PC-9 (cell line): ENCODE measurements at regions of chr15 and their contacts with region 1.

Region 1: DNA sequence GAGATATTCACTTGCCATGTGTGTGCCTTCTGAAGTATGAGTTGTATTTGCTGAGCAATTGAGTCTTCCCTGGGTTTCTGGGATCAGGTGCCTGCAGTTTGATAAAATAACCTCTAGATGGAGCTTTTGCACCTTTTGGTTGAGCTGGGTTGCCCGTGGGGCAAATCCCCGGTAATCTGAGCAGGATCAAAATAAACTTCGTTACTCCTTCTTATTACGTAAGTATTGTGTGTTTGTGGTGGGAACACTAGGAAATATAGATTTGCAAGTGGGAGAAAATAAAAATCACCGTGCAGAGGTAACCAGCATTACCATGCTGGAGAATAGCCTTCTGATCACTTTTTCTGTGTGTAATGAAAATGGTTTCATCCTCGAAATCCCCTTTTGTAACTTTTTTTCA is 277.4 kb upstream of the NR2E3 start:
- DNase-seq: peak; percentile 35 to 37
- H3K4me3 ChIP-seq: no peak overlapping the region
- H3K27ac ChIP-seq: no peak overlapping the region
- H3K4me1 ChIP-seq: 0 out of 2 replicates have a peak, but pooled peaks cover under 1% of the 10 kb centered on the region
- H3K27me3 ChIP-seq: no peaks in the 10 kb centered on the region
- CTCF ChIP-seq: peak; percentile 68

Region 2: GRCh38 chr15:71651750-71652186 is 118.8 kb after region 1 on chr15:
- CTCF ChIA-PET with region 1: no interaction called
- POLR2A ChIA-PET with region 1: no interaction called
- intact Hi-C with region 1: loop called (anchors 5 kb)
- DNase-seq: peak in 1 of 2 experiments; percentile 17
- H3K4me3 ChIP-seq: no peak overlapping the region
- H3K27ac ChIP-seq: no peak overlapping the region
- H3K4me1 ChIP-seq: peaks cover 14% of the 10 kb centered on the region
- H3K27me3 ChIP-seq: no peaks in the 10 kb centered on the region
- CTCF ChIP-seq: peak; percentile 41; the same call in 1 of the 2 replicates

Region 3: DNA sequence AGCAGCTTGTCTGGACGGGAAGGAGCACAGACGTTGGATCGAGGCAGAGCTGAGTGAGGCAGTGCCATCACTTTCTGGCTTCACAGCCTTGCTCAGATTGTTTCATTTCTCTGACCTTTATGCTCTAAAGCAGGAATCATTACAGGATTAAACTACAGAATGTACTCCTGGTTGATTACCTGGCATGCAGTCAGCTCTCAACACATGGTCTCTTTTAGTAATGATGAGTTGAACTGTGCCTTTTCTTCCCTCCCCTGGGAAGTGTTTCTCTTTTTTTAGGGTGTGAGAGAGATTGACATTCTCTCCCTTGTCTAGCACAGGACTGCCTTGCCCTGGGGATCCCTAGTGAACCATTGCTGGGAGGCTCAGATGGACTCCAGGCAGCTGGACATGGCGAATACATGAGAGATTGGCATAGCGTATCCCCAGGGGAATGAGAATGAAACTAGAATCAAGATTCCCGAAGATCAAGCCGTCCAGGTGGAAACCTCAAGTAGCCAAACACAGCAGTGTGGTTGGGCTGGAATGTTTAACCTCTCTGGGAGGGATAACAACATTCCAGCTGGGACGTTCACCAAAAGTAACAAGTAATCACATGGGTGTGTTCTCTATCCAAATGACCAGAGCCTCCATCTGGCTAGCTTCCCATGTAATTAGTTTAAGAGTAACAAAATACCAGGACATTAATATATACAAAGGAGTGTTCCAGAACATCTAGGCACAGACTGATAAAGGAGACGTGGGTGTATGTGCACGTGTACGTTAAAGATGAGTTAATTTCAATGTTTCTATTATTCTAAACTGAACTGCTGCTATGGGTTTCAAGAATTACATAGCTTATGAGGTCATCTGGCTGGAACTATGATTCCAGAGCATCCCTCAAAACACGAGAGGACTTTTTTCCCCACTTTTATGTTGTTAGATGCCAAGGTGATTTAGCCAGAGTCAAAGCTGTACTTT is 158.7 kb after region 1 on chr15:
- CTCF ChIA-PET with region 1: interaction called, 19 read pairs
- POLR2A ChIA-PET with region 1: no interaction called
- intact Hi-C with region 1: no loop called
- DNase-seq: peak; percentile 51 to 68
- H3K4me3 ChIP-seq: no peak overlapping the region
- H3K27ac ChIP-seq: peak overlapping the region; percentile 34; the same call in 1 of the 2 replicates
- H3K4me1 ChIP-seq: peaks cover 10% of the 10 kb centered on the region
- H3K27me3 ChIP-seq: no peaks in the 10 kb centered on the region
- CTCF ChIP-seq: no peak

Region 4: DNA sequence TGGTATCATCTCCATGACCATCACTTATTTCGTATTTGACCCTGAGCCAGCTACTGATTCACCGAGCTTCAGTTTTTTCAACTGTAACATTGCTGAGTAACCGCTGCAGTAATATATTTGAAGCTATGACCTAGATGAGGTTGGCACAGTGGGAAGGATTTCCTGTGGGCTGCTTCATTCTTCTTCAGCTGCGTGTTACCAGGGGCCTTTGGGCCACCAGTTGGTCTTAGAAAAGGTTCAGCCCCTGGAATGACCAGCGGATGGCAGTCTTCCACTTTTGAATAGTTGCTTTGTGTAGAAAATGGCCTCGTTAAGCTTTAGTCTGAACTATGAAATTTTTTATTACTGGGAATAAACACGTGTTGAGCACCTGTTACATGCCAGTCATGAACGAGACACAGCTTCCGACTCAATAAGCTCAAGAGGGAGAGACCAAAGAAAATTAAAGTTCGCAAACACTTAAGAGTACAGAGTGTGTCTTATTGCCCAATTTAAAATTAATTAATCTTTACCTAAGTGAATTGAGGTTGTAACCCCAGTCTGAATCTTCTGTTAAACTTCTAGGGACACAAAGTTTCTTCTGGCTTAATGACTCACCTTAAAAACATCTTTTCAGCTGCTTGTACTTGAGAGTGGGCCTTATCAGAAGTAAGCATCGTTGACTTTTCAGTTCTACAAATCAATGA is 219.8 kb after region 1 on chr15:
- CTCF ChIA-PET with region 1: interaction called, 3 read pairs
- POLR2A ChIA-PET with region 1: interaction called, 3 read pairs
- intact Hi-C with region 1: loop called (anchors 1 kb)
- DNase-seq: peak in 1 of 2 experiments; percentile 57
- H3K4me3 ChIP-seq: no peak overlapping the region
- H3K27ac ChIP-seq: peak overlapping the region; percentile 28; the same call in 1 of the 2 replicates
- H3K4me1 ChIP-seq: peaks cover 26% of the 10 kb centered on the region
- H3K27me3 ChIP-seq: no peaks in the 10 kb centered on the region
- CTCF ChIP-seq: no peak; the same call in 1 of the 2 replicates